Sigmoid colon (tissue), 7 donors: ENCODE measurements at regions of chr19 and their contacts with region 1.

Region 1: GRCh38 chr19:9140159-9140874 is at the start of gene ZNF317:
- DNase-seq: peak; percentile 96
- H3K4me3 ChIP-seq: peak within 1 kb of the TSS; percentile 74 to 94 (median 84)
- H3K27ac ChIP-seq: peak within 1 kb of the TSS; percentile 85 to 93 (median 92)
- H3K4me1 ChIP-seq: peaks cover 0 to 28% (median 14%) of the 10 kb centered on the region in 4 donors
- H3K27me3 ChIP-seq: no peaks in the 10 kb centered on the region
- CTCF ChIP-seq: no peak
- EP300 ChIP-seq: no peak
- POLR2A ChIP-seq: peak in 1 of 2 donors; percentile 57
- total RNA-seq, gene ZNF317: 11.4 to 20.8 (median 17.4) TPM

Region 2: DNA sequence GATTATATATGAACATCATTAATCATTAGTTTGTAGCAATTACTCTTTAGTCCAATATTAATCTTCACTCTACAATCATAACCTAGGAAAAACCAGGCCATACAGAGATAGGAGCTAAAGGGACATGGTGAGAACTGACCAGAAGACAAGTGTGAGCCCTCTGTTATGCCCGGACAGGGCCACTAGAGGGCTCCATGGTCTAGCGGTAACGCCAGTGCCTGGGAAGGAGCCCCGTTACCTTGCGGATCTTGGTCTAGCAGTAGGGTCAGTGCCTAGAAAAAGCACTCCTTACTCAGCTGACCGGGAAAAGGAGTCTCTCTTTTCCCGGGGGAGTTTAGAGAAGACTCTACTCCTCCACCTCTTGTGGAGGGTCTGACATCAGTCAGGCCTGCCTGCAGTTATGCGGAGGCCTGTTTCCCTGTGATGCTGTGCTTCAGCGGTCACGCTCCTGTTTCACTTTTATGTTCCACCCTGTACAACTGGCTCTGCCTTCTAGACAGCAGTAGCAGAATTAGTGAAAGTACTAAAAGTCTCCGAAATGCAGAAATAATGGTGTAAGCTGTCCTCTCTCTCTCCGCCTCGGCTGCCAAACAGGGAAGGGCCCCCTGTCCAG is 65.3 kb after region 1 on chr19:
- intact Hi-C with region 1: loop called (anchors 2 kb)
- DNase-seq: peak; percentile 81
- H3K4me3 ChIP-seq: peak overlapping the region in 3 of 4 donors; percentile 28 to 42 (median 28)
- H3K27ac ChIP-seq: no peak overlapping the region
- H3K4me1 ChIP-seq: peaks cover 0 to 6% (median 2%) of the 10 kb centered on the region in 4 donors
- H3K27me3 ChIP-seq: no peaks in the 10 kb centered on the region
- CTCF ChIP-seq: peak; percentile 7 to 91 (median 78)
- EP300 ChIP-seq: no peak
- POLR2A ChIP-seq: no peak

Region 3: GRCh38 chr19:9309139-9309973 is 169.0 kb after region 1 on chr19 and contains the start of gene ZNF699:
- intact Hi-C with region 1: loop called (anchors 2 kb)
- DNase-seq: peak; percentile 99
- H3K4me3 ChIP-seq: peak within 1 kb of the TSS; percentile 68 to 94 (median 84)
- H3K27ac ChIP-seq: peak within 1 kb of the TSS; percentile 91 to 98 (median 96)
- H3K4me1 ChIP-seq: peaks cover 0 to 21% (median 13%) of the 10 kb centered on the region in 4 donors
- H3K27me3 ChIP-seq: no peaks in the 10 kb centered on the region
- CTCF ChIP-seq: no peak
- EP300 ChIP-seq: peak in 1 of 4 donors; percentile 4
- POLR2A ChIP-seq: peak; percentile 33 to 63
- total RNA-seq, gene ZNF699: 3.1 to 23.7 (median 11.9) TPM

Region 4: DNA sequence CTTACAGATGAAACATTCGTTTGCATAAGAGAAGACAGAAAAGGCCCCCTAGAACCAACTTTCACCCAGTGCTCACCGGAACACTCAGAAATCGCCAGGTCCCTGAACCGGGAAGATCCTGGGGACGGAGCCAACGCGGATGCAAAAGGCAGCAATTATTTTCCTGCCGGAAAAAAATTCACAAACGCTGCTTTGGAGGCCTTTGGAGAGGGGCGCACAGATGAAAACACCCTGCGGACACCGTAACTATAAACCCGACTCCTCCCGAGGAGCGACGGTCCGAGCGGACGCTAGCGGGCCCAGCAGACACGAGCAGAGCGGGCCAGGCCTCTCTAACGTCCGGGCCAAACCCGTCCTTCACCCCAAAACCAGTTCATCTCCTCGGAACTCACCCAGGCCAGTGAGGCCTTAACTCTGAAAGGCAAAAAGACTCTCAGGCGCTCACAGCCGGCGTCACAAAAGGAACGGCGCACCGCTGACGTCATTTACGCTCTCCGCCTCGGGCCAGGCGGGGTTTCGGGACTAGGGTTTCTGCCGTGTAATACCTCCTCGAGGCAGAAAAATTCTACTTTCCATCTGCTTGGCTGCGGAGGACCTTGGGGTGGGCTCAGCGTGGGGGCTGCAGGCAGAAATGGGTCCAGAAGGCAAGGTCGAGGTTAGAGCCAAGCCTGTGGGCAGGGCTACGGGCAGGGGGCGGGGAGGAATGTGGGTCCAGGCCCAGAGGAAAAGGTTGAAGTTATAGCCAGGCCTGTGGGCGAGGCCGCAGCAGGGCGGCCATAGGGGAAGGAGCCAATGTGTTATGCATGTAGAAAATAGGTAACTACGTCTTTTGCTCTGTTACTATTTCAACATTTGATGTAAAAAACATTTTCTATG is 398.1 kb after region 1 on chr19 and contains the start of gene ZNF426:
- intact Hi-C with region 1: loop called (anchors 5 kb)
- DNase-seq: peak; percentile 93
- H3K4me3 ChIP-seq: peak within 1 kb of the TSS; percentile 54 to 76 (median 72)
- H3K27ac ChIP-seq: peak within 1 kb of the TSS; percentile 91 to 95 (median 92)
- H3K4me1 ChIP-seq: peaks cover 0 to 18% (median 10%) of the 10 kb centered on the region in 4 donors
- H3K27me3 ChIP-seq: no peaks in the 10 kb centered on the region
- CTCF ChIP-seq: no peak
- EP300 ChIP-seq: no peak
- POLR2A ChIP-seq: peak in 1 of 2 donors; percentile 5
- total RNA-seq, gene ZNF426: 11.4 to 18.1 (median 12.7) TPM

Region 5: GRCh38 chr19:9674663-9675357 is 534.5 kb after region 1 on chr19 and contains the start of gene ZNF562:
- intact Hi-C with region 1: loop called (anchors 10 kb)
- DNase-seq: peak; percentile 92
- H3K4me3 ChIP-seq: peak within 1 kb of the TSS; percentile 63 to 68 (median 66)
- H3K27ac ChIP-seq: peak within 1 kb of the TSS; percentile 91 to 95 (median 93)
- H3K4me1 ChIP-seq: peaks cover 0 to 16% (median 6%) of the 10 kb centered on the region in 4 donors
- H3K27me3 ChIP-seq: no peaks in the 10 kb centered on the region
- CTCF ChIP-seq: no peak
- EP300 ChIP-seq: no peak
- POLR2A ChIP-seq: peak; percentile 36 to 56
- total RNA-seq, gene ZNF562: 21.3 to 45.4 (median 32.4) TPM